Natural killer cell (primary cell): ENCODE measurements at regions of chr5 and their contacts with region 1.

Region 1: GRCh38 chr5:148826053-148826738 is at the start of gene ADRB2:
- DNase-seq: peak; percentile 92 to 95
- ATAC-seq: peak; percentile 88 to 96 (median 90)
- H3K4me3 ChIP-seq: peak within 1 kb of the TSS; percentile 69
- H3K4me3 Mint-ChIP-seq: peak within 1 kb of the TSS; percentile 98
- H3K27ac ChIP-seq: peak within 1 kb of the TSS; percentile 85
- H3K27ac Mint-ChIP-seq: peak within 1 kb of the TSS; percentile 89 to 91
- H3K4me1 ChIP-seq: peaks cover 31% of the 10 kb centered on the region
- H3K4me1 Mint-ChIP-seq: peaks cover 40 to 59% of the 10 kb centered on the region in 2 donors
- H3K27me3 ChIP-seq: no peaks in the 10 kb centered on the region
- H3K27me3 Mint-ChIP-seq: no peaks in the 10 kb centered on the region
- CTCF ChIP-seq: no peak
- total RNA-seq, gene ADRB2: 47.1 to 78.9 (median 60.7) TPM

Region 2: GRCh38 chr5:148740966-148741742 is 85.0 kb before region 1 on chr5:
- intact Hi-C with region 1: loop called (anchors 5 kb)
- DNase-seq: peak in 1 of 2 donors; percentile 73
- ATAC-seq: peak in 2 of 3 donors; percentile 70 to 73
- H3K4me3 ChIP-seq: no peak overlapping the region
- H3K4me3 Mint-ChIP-seq: no peak overlapping the region
- H3K27ac ChIP-seq: no peak overlapping the region
- H3K27ac Mint-ChIP-seq: no peak overlapping the region
- H3K4me1 ChIP-seq: no peaks in the 10 kb centered on the region
- H3K4me1 Mint-ChIP-seq: no peaks in the 10 kb centered on the region
- H3K27me3 ChIP-seq: no peaks in the 10 kb centered on the region
- H3K27me3 Mint-ChIP-seq: peaks cover 5 to 7% of the 10 kb centered on the region in 2 donors
- CTCF ChIP-seq: peak; percentile 79

Region 3: DNA sequence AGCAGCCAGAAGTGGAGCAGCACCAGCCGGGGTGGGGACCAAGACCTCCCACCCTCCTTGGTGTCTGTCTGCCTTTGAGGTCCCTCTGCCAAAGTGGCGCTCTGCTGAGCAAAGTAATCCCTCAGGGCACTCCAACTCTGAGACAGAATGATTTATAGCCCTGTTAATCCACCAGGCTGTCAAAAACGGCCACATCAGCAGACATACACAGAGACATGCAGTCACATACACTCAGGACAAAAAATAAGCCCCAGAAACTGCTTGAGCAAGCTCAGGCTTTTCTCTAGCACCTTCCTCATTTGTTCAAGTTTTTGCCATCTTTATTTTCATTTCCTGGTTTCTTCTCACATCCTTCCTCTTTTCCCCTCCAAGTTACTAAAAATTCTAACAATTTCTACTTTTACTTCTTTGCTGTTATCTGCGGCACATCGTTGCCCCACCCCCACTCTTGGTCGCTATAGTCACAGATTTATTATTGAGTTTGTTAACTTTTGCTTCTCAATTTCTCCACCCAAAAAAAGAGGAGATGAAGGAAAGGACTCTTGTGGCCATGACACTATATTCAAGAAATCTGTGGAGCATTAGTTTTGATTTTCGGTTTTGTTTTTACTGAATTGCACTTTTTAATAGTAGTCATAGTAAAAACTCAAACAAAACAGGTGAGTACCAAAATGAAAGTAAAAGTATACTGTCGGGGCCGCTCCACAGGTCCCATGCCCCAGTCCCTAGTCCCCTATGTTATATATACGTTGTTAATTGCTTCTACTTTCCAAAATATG is 17.1 kb before region 1 on chr5:
- intact Hi-C with region 1: loop called (anchors 2 kb)
- DNase-seq: peak in 1 of 2 donors; percentile 69
- ATAC-seq: peak; percentile 77 to 81 (median 79)
- H3K4me3 ChIP-seq: peak overlapping the region; percentile 36
- H3K4me3 Mint-ChIP-seq: peak overlapping the region; percentile 93
- H3K27ac ChIP-seq: peak overlapping the region; percentile 36
- H3K27ac Mint-ChIP-seq: peak overlapping the region; percentile 86 to 87
- H3K4me1 ChIP-seq: peaks cover 38% of the 10 kb centered on the region
- H3K4me1 Mint-ChIP-seq: peaks cover 28 to 31% of the 10 kb centered on the region in 2 donors
- H3K27me3 ChIP-seq: no peaks in the 10 kb centered on the region
- H3K27me3 Mint-ChIP-seq: no peaks in the 10 kb centered on the region
- CTCF ChIP-seq: no peak

Region 4: DNA sequence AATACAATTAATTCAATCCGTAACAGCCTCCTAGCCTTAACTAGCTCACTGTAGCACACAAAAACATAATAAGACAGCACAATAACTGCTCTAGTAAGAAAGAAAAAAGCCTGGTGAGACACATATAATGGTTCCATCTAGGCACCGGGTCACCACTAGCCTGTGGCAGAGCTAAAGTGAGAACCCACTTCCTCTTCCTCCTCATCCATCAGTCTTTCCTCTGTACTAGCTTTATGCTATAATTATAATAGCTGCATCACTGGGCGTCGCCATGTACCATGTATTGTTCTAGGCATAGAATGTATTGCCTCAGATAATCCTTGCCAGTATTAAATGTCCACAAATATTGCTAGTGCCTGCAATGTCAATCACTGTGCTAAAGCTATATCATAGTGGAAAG is 23.3 kb after region 1 on chr5:
- intact Hi-C with region 1: loop called (anchors 1 kb)
- DNase-seq: peak; percentile 54 to 77
- ATAC-seq: peak; percentile 52 to 82 (median 75)
- H3K4me3 ChIP-seq: no peak overlapping the region
- H3K4me3 Mint-ChIP-seq: peak overlapping the region; percentile 95
- H3K27ac ChIP-seq: peak overlapping the region; percentile 93
- H3K27ac Mint-ChIP-seq: peak overlapping the region; percentile 94 to 97
- H3K4me1 ChIP-seq: peaks cover 76% of the 10 kb centered on the region
- H3K4me1 Mint-ChIP-seq: peaks cover 89 to 90% of the 10 kb centered on the region in 2 donors
- H3K27me3 ChIP-seq: no peaks in the 10 kb centered on the region
- H3K27me3 Mint-ChIP-seq: no peaks in the 10 kb centered on the region
- CTCF ChIP-seq: no peak

Region 5: GRCh38 chr5:148864113-148864841 is 38.1 kb after region 1 on chr5:
- intact Hi-C with region 1: loop called (anchors 5 kb)
- DNase-seq: no peak
- ATAC-seq: no peak
- H3K4me3 ChIP-seq: no peak overlapping the region
- H3K4me3 Mint-ChIP-seq: no peak overlapping the region
- H3K27ac ChIP-seq: no peak overlapping the region
- H3K27ac Mint-ChIP-seq: peak overlapping the region; percentile 47 to 97
- H3K4me1 ChIP-seq: peaks cover 36% of the 10 kb centered on the region
- H3K4me1 Mint-ChIP-seq: peaks cover 86 to 90% of the 10 kb centered on the region in 2 donors
- H3K27me3 ChIP-seq: no peaks in the 10 kb centered on the region
- H3K27me3 Mint-ChIP-seq: no peaks in the 10 kb centered on the region
- CTCF ChIP-seq: no peak

Region 6: GRCh38 chr5:148887123-148887881 is 61.1 kb after region 1 on chr5:
- intact Hi-C with region 1: loop called (anchors 2 kb)
- DNase-seq: no peak
- ATAC-seq: peak; percentile 80 to 83 (median 81)
- H3K4me3 ChIP-seq: no peak overlapping the region
- H3K4me3 Mint-ChIP-seq: peak overlapping the region; percentile 48
- H3K27ac ChIP-seq: peak overlapping the region; percentile 39
- H3K27ac Mint-ChIP-seq: peak overlapping the region; percentile 85 to 92
- H3K4me1 ChIP-seq: peaks cover 2% of the 10 kb centered on the region
- H3K4me1 Mint-ChIP-seq: peaks cover 63 to 64% of the 10 kb centered on the region in 2 donors
- H3K27me3 ChIP-seq: no peaks in the 10 kb centered on the region
- H3K27me3 Mint-ChIP-seq: no peaks in the 10 kb centered on the region
- CTCF ChIP-seq: no peak